Endothelial cell of umbilical vein (primary cell): ENCODE measurements at regions of chr11 and their contacts with region 1.

Region 1: DNA sequence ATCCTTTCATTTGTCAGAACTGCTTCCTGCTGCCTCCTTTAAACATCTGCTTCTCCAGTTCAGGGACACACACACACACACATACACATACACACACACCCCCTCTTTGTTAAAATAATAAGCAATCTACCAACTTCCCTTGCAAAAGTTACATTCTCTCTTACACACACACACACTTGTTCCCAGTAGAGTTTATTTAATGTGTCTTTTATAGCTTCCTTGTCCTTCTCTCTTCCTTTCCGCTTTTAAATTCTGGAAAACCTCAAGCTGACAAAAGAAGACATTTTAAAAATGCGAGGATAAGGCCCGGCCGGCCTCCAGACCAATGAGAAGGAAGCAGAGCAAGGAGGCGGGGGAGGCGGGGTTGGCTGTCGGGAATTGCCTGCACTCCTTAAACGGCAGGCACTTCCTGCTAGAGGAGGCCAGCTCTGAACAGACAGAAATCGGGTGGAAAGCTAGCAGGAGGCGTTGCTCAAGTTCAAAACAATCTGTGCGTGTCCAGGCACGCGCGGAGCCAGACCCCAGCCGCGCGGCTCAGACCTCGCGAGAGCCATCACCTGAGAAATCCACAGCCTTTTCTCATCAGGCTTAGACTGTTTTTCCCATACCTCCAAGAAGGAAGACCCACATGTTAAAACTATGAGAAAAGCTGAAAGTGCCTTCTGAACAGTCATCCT is 99.9 kb downstream of the MAML2 start:
- DNase-seq: peak; percentile 97
- H3K4me3 ChIP-seq: peak overlapping the region in 2 of 3 experiments; percentile 42 to 58
- H3K27ac ChIP-seq: peak overlapping the region; percentile 74
- H3K4me1 ChIP-seq: peaks cover 19% of the 10 kb centered on the region
- H3K27me3 ChIP-seq: no peaks in the 10 kb centered on the region
- CTCF ChIP-seq: no peak
- POLR2A ChIP-seq: peak; percentile 46

Region 2: GRCh38 chr11:95977534-95978174 is 265.5 kb before region 1 on chr11:
- CTCF ChIA-PET with region 1: no interaction called
- POLR2A ChIA-PET with region 1: no interaction called
- dilution Hi-C with region 1: no loop called
- intact Hi-C with region 1: no loop called
- DNase-seq: peak; percentile 78
- H3K4me3 ChIP-seq: no peak overlapping the region
- H3K27ac ChIP-seq: peak overlapping the region; percentile 74
- H3K4me1 ChIP-seq: peaks cover 22% of the 10 kb centered on the region
- H3K27me3 ChIP-seq: no peaks in the 10 kb centered on the region
- CTCF ChIP-seq: no peak
- POLR2A ChIP-seq: no peak

Region 3: DNA sequence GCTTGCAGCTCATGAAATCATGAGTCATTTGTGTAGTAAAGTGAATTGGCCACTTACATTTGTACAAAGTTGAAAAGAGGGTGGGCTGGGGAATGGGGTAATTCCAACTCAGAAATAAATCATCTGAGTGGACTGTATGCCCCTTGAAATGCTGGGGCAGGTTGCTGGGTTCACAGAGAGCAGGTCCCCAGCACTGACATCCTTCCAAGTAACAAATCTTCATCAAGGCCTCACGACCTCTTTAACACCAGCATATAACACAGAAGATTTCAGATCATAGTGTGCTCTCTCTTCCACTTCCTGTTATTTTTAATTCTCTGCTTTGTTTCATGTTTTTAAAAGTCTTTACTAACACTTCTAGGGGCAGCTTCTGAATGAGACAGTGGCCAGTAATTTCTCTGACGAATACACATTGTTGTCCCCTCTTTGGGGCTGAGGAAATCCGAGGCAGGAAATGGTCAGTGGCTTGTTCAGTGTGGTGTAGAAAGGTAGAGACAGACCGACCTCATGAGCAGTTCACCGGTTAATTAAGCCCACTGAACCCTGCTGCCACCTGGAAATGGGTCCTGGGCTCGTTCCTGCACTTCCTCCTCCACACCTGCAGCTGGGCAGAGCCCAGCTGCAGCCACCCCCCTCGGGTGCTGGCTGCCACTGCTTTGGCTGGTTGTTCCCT is 27.9 kb before region 1 on chr11:
- CTCF ChIA-PET with region 1: interaction called, 8 read pairs
- POLR2A ChIA-PET with region 1: no interaction called
- dilution Hi-C with region 1: no loop called
- intact Hi-C with region 1: loop called (anchors 1 kb)
- DNase-seq: peak; percentile 81
- H3K4me3 ChIP-seq: peak overlapping the region in 1 of 3 experiments; percentile 4
- H3K27ac ChIP-seq: peak overlapping the region; percentile 92
- H3K4me1 ChIP-seq: peaks cover 66% of the 10 kb centered on the region
- H3K27me3 ChIP-seq: no peaks in the 10 kb centered on the region
- CTCF ChIP-seq: no peak
- POLR2A ChIP-seq: peak; percentile 38

Region 4: DNA sequence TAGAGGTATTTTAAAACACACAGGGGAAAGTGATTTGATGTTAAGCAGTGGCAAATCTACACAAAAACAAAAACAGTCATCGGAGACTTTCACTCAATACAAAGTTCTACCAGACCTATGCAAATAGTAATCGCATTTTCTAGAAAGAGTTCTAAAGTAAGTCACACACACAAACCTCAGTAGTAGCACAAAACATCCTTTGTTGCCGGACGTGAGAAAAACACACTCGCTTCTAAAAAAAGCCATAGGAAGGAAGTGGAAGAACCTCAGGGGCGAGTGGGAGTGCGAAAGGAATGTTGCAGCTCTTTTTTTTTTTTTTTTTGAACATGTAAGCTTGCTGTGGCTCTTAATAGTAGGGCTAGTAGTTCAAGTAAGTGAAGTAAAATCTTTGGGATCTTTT is 11.0 kb after region 1 on chr11:
- CTCF ChIA-PET with region 1: interaction called, 5 read pairs
- POLR2A ChIA-PET with region 1: no interaction called
- dilution Hi-C with region 1: no loop called
- intact Hi-C with region 1: loop called (anchors 1 kb)
- DNase-seq: peak; percentile 94
- H3K4me3 ChIP-seq: peak overlapping the region in 1 of 3 experiments; percentile 58
- H3K27ac ChIP-seq: peak overlapping the region; percentile 65
- H3K4me1 ChIP-seq: peaks cover 33% of the 10 kb centered on the region
- H3K27me3 ChIP-seq: no peaks in the 10 kb centered on the region
- CTCF ChIP-seq: no peak
- POLR2A ChIP-seq: peak; percentile 36